ENCODE measurements at regions of chrX and their contacts with region 1.

Region 1: DNA sequence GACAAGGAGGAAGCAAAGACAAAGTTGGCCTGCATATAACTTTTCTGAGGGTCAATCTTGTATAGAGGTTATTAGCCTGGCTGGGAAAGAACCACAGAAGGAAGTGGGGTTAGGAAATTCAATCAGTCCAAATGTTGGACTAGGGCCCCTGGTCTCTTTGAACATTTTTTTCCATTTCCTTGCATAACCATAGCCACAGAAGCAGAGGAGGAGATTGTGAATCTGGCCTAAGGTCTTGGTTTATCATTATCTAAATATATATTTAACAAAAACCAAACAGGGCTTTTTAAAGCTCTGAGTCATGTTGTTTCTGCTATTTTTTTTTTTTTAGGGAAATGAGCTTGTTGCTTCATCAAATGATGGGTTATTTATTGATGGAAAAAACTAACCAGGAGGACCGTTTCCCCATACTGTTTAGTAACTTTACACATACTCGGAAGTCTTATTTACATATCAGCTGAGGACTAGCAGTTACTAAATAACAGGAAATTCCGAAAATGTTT is 97.7 kb upstream of the ACSL4 start:
- DNase-seq: peak; percentile 93
- ATAC-seq: peak; percentile 87
- H3K4me3 ChIP-seq: peak overlapping the region in 1 of 3 experiments; percentile 37; a peak in 1 of 6 replicates
- H3K27ac ChIP-seq: peak overlapping the region; percentile 96
- H3K4me1 ChIP-seq: peaks cover 69% of the 10 kb centered on the region
- H3K27me3 ChIP-seq: no peaks in the 10 kb centered on the region
- CTCF ChIP-seq: no peak
- EP300 ChIP-seq: peak; percentile 54 to 94; a peak in 2 of 4 replicates
- POLR2A ChIP-seq: no peak
- RAD21 ChIP-seq: no peak

Region 2: DNA sequence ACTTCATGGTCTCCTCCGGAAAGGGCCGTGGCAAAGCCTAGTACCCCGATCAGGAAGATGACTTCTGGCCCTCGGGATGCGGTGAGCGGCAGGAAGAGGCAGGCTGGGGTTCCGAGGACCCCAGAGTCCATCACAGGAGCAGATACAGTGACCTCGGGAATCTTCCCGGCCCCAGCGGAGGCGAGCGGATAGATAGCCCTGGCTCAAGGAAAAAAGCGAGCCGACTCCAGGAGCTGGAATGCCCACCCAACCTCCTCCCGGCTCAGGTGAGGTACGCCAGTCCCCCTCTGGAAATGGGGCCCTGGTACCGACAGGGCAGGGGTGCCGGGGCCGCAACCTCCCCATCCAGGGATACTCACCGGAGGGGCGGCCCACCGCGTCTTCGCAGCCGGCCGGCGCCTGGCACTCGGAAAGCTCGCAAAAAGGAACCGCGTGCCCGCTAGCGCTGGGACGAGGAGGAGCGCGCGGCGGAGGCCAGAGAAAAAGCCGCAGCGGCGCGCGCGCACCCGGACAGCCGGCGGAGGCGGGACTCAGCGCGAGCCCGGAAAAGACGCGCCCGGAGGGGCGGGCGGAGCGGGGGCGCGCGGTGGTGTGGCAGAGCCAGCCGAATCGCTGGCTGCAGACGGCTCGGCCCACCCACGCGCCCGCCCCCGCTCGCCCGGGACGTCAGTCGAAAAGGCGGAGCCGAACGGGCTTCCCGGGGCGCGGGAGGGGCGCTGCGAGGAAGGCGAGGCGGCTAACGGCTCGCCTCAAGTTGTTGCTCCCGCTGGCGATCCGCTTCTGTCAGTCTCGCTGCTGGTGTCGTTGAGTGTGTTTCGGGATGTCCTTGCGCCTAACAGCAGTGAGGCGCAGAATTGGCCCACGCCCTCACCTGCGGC is 97.7 kb before region 1 on chrX and contains the start of gene ACSL4:
- CTCF ChIA-PET with region 1: no interaction called
- POLR2A ChIA-PET with region 1: interaction called, 17 read pairs
- in situ Hi-C with region 1: loop called (anchors 10 kb)
- intact Hi-C with region 1: no loop called
- DNase-seq: peak; percentile 63
- ATAC-seq: peak; percentile 96
- H3K4me3 ChIP-seq: peak within 1 kb of the TSS; percentile 85 to 91 (median 89)
- H3K27ac ChIP-seq: peak within 1 kb of the TSS; percentile 91
- H3K4me1 ChIP-seq: peaks cover 44% of the 10 kb centered on the region
- H3K27me3 ChIP-seq: no peaks in the 10 kb centered on the region; a peak in 1 of 5 replicates
- CTCF ChIP-seq: no peak
- EP300 ChIP-seq: no peak; a peak in 1 of 4 replicates
- POLR2A ChIP-seq: peak; percentile 70 to 89
- RAD21 ChIP-seq: no peak
- total RNA-seq, gene ACSL4: 316 and 521 TPM in 2 replicates

Region 3: DNA sequence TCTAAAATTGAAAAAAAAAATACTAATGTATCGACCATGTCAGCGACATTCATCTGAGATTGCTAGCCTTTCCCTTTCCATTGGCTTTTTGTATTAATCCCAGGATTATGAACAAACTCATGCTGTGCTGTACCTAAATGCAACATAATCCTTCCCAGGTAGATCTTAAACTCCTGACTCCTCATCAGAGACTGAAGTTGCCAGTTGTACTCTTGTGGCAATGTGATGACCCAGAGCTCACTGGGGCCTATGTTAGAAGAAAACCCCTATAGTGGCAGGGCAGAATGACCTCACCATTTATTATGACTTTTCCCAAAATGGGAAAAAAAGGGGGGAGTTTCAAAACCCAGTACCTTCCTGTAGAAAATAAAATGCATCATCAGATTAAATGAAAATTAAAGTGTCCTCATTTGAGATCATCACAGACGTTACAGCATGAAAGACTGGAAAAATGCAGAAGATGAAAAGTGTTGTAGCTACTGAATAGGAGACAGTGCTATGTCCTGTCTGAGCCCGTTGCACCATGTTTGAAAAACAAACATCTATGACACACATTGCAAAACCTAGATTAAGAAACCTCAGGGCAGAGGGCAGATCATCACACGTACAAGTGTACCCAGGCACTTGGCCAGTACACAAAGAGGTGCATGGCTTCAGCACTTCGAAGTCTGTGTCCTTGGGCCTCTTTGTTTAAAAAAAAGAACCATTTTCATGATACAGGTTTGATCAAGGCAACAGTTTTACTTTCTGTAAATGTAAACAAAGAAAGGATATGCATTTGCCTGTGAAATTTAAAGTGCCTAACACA is 90.9 kb before region 1 on chrX:
- CTCF ChIA-PET with region 1: no interaction called
- POLR2A ChIA-PET with region 1: interaction called, 13 read pairs
- in situ Hi-C with region 1: loop called (anchors 10 kb)
- intact Hi-C with region 1: loop called (anchors 5 kb)
- DNase-seq: peak; percentile 95
- ATAC-seq: peak; percentile 98
- H3K4me3 ChIP-seq: peak overlapping the region in 2 of 3 experiments; percentile 10 to 25; a peak in 2 of 6 replicates
- H3K27ac ChIP-seq: peak overlapping the region; percentile 93
- H3K4me1 ChIP-seq: peaks cover 81% of the 10 kb centered on the region
- H3K27me3 ChIP-seq: no peaks in the 10 kb centered on the region
- CTCF ChIP-seq: no peak
- EP300 ChIP-seq: peak; percentile 97 to 99
- POLR2A ChIP-seq: no peak; a peak in 1 of 4 replicates
- RAD21 ChIP-seq: no peak

Region 4: GRCh38 chrX:109818976-109819375 is 11.8 kb before region 1 on chrX:
- CTCF ChIA-PET with region 1: no interaction called
- POLR2A ChIA-PET with region 1: interaction called, 10 read pairs
- in situ Hi-C with region 1: no loop called
- intact Hi-C with region 1: no loop called
- DNase-seq: no peak
- ATAC-seq: no peak
- H3K4me3 ChIP-seq: no peak overlapping the region
- H3K27ac ChIP-seq: no peak overlapping the region
- H3K4me1 ChIP-seq: peaks cover 90% of the 10 kb centered on the region
- H3K27me3 ChIP-seq: no peaks in the 10 kb centered on the region
- CTCF ChIP-seq: no peak
- EP300 ChIP-seq: no peak
- POLR2A ChIP-seq: no peak
- RAD21 ChIP-seq: no peak

Region 5: DNA sequence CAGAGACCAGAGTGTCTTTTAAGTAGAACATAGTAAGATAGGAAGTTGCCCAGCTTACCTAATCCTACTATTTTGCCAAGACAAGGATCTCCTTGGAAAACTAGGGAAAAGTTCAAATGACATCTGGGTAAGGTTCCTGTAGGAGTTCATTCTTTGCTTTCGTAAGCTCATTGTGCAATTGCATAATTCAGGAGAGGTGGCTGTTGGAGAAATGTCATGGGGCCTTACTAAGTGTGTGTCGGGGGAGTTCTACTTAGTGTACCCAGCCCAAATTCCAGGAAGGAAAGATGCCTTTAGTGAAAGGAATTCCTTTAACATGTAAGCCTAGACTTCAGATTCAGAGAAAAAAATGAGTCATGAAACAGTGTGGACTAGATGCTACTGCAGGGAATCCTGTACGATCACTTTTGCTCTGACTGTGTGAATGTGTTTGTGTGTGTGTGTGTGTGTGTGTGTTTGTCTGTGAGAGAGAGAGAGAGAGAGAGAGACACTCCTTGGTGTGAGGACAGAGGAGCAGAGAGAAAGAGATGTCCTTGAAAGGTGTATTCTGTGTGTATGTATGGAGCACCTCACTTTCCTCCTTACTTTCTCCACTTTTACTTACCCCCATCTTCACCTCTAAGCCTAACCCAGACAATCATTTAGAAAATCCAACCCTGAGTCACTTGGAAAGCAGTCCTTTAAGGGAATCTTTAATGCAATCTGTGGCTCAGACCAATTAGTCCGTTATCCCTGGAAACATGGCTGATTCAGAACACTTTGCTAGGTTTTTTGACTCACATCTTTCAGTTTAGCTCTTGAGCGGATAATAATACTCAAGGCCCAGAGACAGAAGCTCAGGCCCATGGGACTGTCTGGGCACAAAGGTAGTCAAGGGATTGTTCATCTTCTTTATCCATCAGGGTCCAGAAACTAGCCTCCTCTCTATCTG is 16.8 kb after region 1 on chrX:
- CTCF ChIA-PET with region 1: no interaction called
- POLR2A ChIA-PET with region 1: interaction called, 11 read pairs
- in situ Hi-C with region 1: no loop called
- intact Hi-C with region 1: no loop called
- DNase-seq: peak; percentile 42
- ATAC-seq: peak; percentile 26; the same call in 2 of the 3 replicates
- H3K4me3 ChIP-seq: no peak overlapping the region
- H3K27ac ChIP-seq: peak overlapping the region; percentile 62
- H3K4me1 ChIP-seq: peaks cover 89% of the 10 kb centered on the region
- H3K27me3 ChIP-seq: no peaks in the 10 kb centered on the region
- CTCF ChIP-seq: no peak
- EP300 ChIP-seq: 0 out of 4 replicates have a peak, but pooled peaks of 1 of the 2 experiments have one; percentile 25
- POLR2A ChIP-seq: no peak
- RAD21 ChIP-seq: no peak

Region 6: GRCh38 chrX:109856974-109857373 is 26.2 kb after region 1 on chrX:
- CTCF ChIA-PET with region 1: no interaction called
- POLR2A ChIA-PET with region 1: interaction called, 12 read pairs
- in situ Hi-C with region 1: no loop called
- intact Hi-C with region 1: no loop called
- DNase-seq: peak; percentile 28
- ATAC-seq: no peak
- H3K4me3 ChIP-seq: no peak overlapping the region; a peak in 1 of 6 replicates
- H3K27ac ChIP-seq: peak overlapping the region; percentile 96
- H3K4me1 ChIP-seq: peaks cover 75% of the 10 kb centered on the region
- H3K27me3 ChIP-seq: no peaks in the 10 kb centered on the region
- CTCF ChIP-seq: peak; percentile 50
- EP300 ChIP-seq: no peak; a peak in 1 of 4 replicates
- POLR2A ChIP-seq: no peak
- RAD21 ChIP-seq: 0 out of 2 replicates have a peak, but pooled peaks have one; percentile 31

Region 7: GRCh38 chrX:109880629-109881028 is 49.9 kb after region 1 on chrX:
- CTCF ChIA-PET with region 1: no interaction called
- POLR2A ChIA-PET with region 1: interaction called, 11 read pairs
- in situ Hi-C with region 1: no loop called
- intact Hi-C with region 1: no loop called
- DNase-seq: peak; percentile 60
- ATAC-seq: peak; percentile 83
- H3K4me3 ChIP-seq: no peak overlapping the region; a peak in 1 of 6 replicates
- H3K27ac ChIP-seq: peak overlapping the region; percentile 55
- H3K4me1 ChIP-seq: peaks cover 66% of the 10 kb centered on the region
- H3K27me3 ChIP-seq: no peaks in the 10 kb centered on the region
- CTCF ChIP-seq: no peak
- EP300 ChIP-seq: peak in 1 of 2 experiments; percentile 14; a peak in 1 of 4 replicates
- POLR2A ChIP-seq: no peak
- RAD21 ChIP-seq: no peak

Region 8: DNA sequence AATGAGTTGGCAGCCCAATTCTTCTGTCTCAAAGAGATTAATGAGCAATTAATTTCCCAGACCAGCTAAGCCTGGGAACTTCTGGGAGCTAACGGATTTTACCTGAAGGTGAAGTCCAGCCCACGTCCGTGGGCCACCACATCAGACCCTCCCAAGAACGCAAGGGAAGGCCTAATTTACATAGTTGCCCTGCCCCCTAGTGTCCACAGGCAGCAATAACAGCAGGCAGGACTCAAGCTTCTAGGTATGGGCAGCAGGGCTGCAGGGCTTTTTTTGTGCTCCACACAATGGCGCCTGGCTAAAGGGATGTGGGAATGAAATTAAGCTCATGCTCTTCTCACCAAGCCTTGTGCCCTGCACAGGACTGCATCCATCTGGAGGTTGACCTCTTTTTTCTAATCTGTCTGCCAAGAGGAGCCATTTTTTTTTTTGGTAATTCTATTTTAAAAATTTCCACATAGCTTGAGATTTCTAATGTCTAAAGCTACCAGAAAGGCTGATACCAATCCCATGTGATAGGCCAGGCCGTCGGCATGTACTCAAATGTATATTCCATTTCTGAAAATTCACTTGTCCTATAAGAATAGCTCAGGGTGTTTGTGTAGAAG is 60.2 kb after region 1 on chrX:
- CTCF ChIA-PET with region 1: no interaction called
- POLR2A ChIA-PET with region 1: no interaction called
- in situ Hi-C with region 1: no loop called
- intact Hi-C with region 1: no loop called
- DNase-seq: peak; percentile 43
- ATAC-seq: peak; percentile 89
- H3K4me3 ChIP-seq: peak overlapping the region in 2 of 3 experiments; percentile 28 to 33; a peak in 2 of 6 replicates
- H3K27ac ChIP-seq: no peak overlapping the region
- H3K4me1 ChIP-seq: peaks cover 34% of the 10 kb centered on the region
- H3K27me3 ChIP-seq: no peaks in the 10 kb centered on the region
- CTCF ChIP-seq: peak; percentile 89
- EP300 ChIP-seq: no peak
- POLR2A ChIP-seq: no peak
- RAD21 ChIP-seq: peak; percentile 34; the same call in 1 of the 2 replicates

Region 9: GRCh38 chrX:111010111-111010510 is 1179.4 kb after region 1 on chrX:
- CTCF ChIA-PET with region 1: no interaction called
- POLR2A ChIA-PET with region 1: no interaction called
- in situ Hi-C with region 1: no loop called
- intact Hi-C with region 1: no loop called
- DNase-seq: no peak
- ATAC-seq: no peak
- H3K4me3 ChIP-seq: no peak overlapping the region
- H3K27ac ChIP-seq: no peak overlapping the region
- H3K4me1 ChIP-seq: peaks cover 17% of the 10 kb centered on the region
- H3K27me3 ChIP-seq: no peaks in the 10 kb centered on the region
- CTCF ChIP-seq: no peak
- EP300 ChIP-seq: no peak
- POLR2A ChIP-seq: no peak
- RAD21 ChIP-seq: no peak